Naive thymus-derived CD8-positive, alpha-beta T cell (primary cell): ENCODE measurements at regions of chr17 and their contacts with region 1.

Region 1: GRCh38 chr17:43367737-43368242 is 31.0 kb upstream of the ARL4D start:
- DNase-seq: peak in 2 of 10 donors; percentile 88 to 93
- ATAC-seq: peak; percentile 56 to 67
- H3K4me3 Mint-ChIP-seq: peak overlapping the region; percentile 79 to 98 (median 97)
- H3K27ac Mint-ChIP-seq: peak overlapping the region; percentile 99 to 100 (median 100)
- H3K4me1 Mint-ChIP-seq: peaks cover 32 to 63% (median 46%) of the 10 kb centered on the region in 4 donors
- H3K27me3 Mint-ChIP-seq: no peaks in the 10 kb centered on the region

Region 2: DNA sequence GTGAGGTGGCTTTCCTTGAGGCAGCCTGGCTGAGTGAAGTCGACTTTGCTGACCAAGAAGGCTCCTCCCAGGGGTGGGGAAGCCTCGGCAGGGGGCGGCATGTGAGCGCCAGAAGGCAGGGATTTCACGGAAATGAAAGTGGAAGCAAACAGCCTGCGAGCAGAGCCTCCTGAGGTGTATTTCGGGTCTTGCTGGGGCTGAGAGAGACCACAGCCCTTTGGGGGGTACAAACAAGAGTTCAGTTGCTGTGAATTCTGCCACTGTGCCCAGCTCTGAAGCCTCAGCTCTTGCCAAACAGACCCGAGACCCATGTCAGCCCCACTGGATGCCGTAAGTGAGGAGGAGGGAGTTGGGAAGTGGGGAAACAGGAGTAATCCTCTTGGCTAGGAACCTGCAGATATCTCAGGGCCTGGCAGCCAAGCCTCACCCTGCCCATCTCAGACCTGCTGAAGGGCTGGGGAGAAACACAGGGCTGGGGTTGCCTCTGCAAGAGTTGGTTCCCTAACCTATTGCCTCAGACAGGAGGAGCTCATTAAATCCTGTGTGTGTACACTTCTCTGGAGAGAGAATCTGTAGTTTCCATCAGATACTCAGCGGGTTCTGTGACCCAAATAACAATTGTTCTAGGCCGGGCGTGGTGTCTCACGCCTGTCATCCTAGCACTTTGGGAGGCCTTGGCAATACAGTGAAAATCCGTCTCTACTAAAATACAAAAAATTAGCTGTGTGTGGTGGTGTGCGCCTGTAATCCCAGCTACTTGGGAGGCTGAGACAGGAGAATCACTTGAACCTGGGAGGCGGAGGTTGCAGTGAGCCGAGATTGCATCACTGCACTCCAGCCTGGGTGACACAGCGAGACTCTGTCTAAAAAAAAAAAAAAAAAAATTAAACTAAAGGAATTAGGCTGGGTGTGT is 360.9 kb before region 1 on chr17 and contains the start of gene IFI35:
- POLR2A ChIA-PET with region 1: interaction called, 10 read pairs
- DNase-seq: peak; percentile 66 to 91 (median 82)
- ATAC-seq: peak; percentile 99
- H3K4me3 Mint-ChIP-seq: peak within 1 kb of the TSS; percentile 98 to 100 (median 99)
- H3K27ac Mint-ChIP-seq: peak within 1 kb of the TSS; percentile 98 to 100 (median 99)
- H3K4me1 Mint-ChIP-seq: peaks cover 8 to 35% (median 27%) of the 10 kb centered on the region in 4 donors
- H3K27me3 Mint-ChIP-seq: no peaks in the 10 kb centered on the region
- polyA plus RNA-seq, gene IFI35: 44.8 to 49.8 (median 47.2) TPM

Region 3: DNA sequence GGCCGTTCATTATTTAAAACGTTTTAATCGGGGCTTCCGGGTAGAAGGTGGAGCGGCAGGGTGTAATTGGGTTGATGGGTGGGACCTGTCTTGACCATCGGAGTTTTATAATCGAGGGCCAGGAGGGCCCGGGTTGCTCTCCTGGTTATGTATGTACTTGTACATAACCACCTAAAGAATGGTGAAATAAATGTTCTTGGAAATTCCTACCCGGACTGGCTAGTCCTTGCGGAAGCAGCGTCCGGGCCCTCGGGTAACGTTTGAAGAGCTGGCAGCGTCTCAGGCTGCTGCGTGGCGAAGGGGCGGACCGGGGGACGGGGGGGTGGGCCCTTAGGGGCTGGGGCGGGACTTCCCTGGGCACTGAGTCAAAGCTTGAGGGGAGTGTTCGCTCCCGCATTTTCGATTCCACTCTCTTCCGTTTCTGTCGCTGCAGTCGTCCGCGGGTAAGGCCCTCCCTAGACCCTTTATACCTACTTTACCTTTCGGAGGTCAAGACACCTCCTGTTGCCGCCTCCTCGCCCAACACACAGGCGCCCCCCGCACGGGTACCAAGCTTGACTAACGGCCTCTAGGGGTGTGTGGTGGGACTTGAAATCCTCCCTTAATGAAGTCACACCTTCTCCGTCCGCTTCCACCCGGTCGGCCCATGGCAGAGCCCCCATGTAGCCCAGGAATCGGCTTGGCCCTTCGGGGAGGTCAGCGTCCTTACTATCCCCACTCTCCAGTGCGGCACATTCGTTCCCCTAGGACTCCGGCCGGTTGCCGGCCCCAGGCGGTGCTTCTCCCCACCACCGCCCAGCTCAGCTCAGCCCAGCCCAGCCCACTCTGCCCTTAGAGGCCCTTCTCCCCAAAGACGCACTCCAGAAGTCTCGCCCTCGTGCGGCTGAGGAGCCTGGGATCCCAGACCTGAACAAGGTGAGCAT is 156.0 kb before region 1 on chr17 and contains the start of gene TMEM106A:
- POLR2A ChIA-PET with region 1: interaction called, 18 read pairs
- DNase-seq: peak; percentile 54 to 85 (median 66)
- ATAC-seq: peak; percentile 88 to 90
- H3K4me3 Mint-ChIP-seq: peak within 1 kb of the TSS; percentile 88 to 100 (median 99)
- H3K27ac Mint-ChIP-seq: peak within 1 kb of the TSS; percentile 95 to 99 (median 97)
- H3K4me1 Mint-ChIP-seq: peaks cover 24 to 45% (median 41%) of the 10 kb centered on the region in 4 donors
- H3K27me3 Mint-ChIP-seq: no peaks in the 10 kb centered on the region
- polyA plus RNA-seq, gene TMEM106A: 4.1 to 5.5 (median 4.2) TPM

Region 4: GRCh38 chr17:43344685-43345084 is 23.1 kb before region 1 on chr17:
- POLR2A ChIA-PET with region 1: no interaction called
- DNase-seq: no peak
- ATAC-seq: no peak
- H3K4me3 Mint-ChIP-seq: no peak overlapping the region
- H3K27ac Mint-ChIP-seq: no peak overlapping the region
- H3K4me1 Mint-ChIP-seq: no peaks in the 10 kb centered on the region
- H3K27me3 Mint-ChIP-seq: no peaks in the 10 kb centered on the region

Region 5: GRCh38 chr17:43393944-43394482 is 26.2 kb after region 1 on chr17:
- POLR2A ChIA-PET with region 1: interaction called, 755 read pairs
- DNase-seq: peak; percentile 75 to 95 (median 88)
- ATAC-seq: peak; percentile 30
- H3K4me3 Mint-ChIP-seq: peak overlapping the region in 3 of 10 donors; percentile 3 to 12 (median 8)
- H3K27ac Mint-ChIP-seq: peak overlapping the region in 8 of 10 donors; percentile 40 to 79 (median 57)
- H3K4me1 Mint-ChIP-seq: peaks cover 13 to 44% (median 27%) of the 10 kb centered on the region in 4 donors
- H3K27me3 Mint-ChIP-seq: no peaks in the 10 kb centered on the region

Region 6: DNA sequence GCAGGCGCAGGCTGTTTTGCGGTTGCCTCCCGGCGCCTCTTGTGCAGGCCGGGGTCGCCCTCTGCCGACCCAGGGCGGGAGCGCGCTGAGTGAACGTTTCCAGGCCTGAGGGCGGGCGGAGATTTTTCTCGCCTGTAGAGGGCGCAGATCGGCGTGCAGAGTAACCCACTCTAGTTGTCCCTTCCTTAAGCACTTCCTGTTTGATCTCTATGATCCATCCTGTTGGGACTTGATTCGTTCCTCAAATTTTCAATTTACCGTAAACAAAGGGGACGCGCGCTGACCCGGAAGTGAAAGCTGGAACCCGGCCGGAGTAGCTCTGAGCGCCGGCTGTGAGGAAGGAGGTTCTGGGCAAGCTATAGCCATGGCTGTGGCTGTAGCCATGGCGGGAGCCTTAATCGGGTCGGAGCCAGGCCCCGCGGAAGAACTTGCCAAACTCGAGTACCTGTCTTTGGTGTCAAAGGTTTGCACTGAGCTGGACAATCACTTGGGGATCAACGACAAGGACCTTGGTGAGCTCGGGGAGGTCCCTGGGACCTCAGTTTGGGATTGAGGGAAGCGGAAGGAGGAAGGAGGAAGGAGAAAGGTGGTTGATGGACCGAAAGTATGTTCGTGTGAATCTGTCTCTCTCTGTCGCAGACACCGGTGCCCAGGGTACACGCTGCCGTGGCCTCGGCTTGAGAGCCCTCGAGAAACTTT is 116.0 kb after region 1 on chr17 and contains the start of gene DHX8:
- POLR2A ChIA-PET with region 1: interaction called, 91 read pairs
- DNase-seq: peak; percentile 96 to 99 (median 98)
- ATAC-seq: peak; percentile 94 to 96
- H3K4me3 Mint-ChIP-seq: peak within 1 kb of the TSS; percentile 95 to 100 (median 100)
- H3K27ac Mint-ChIP-seq: peak within 1 kb of the TSS; percentile 97 to 100 (median 100)
- H3K4me1 Mint-ChIP-seq: peaks cover 10 to 48% (median 35%) of the 10 kb centered on the region in 4 donors
- H3K27me3 Mint-ChIP-seq: no peaks in the 10 kb centered on the region
- polyA plus RNA-seq, gene DHX8: 16.3 to 28.4 (median 28.2) TPM

Region 7: DNA sequence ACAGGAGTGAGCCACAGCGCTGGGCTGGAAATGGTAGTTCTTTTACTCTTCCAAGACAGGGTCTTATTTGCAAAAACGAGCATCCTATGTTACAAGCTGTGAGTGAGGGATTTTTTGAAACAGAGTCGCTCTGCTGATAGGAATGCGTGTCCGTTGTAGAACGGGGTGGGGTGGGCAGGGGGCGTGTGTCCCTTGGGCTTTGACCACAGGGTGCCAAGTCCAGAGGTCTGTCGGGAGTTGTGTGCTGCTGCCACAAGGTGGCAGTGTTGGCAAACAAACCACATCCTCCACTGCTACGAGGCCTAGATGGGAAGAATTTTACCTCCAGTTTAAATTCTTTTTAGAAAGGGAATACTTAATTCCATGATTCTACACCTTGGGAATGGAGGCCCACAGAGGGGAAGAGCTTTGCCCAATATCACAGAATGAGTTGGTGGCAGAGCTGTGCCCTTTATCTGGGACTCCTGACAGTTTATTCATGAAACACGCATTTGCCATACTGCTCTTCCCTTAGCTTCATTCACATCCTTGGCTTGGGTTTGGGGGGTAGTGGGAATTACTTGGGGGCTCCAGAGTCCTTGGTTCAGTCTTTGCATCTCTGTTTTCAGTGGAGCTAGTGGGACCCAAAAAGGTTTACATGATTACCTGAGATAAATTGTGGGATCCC is 208.9 kb after region 1 on chr17:
- POLR2A ChIA-PET with region 1: no interaction called
- DNase-seq: peak; percentile 33 to 77 (median 56)
- ATAC-seq: peak; percentile 81 to 90
- H3K4me3 Mint-ChIP-seq: no peak overlapping the region
- H3K27ac Mint-ChIP-seq: no peak overlapping the region
- H3K4me1 Mint-ChIP-seq: peaks cover 5 to 23% (median 15%) of the 10 kb centered on the region in 4 donors
- H3K27me3 Mint-ChIP-seq: peaks cover 0 to 3% (median 2%) of the 10 kb centered on the region in 5 donors